Gastrocnemius medialis (tissue), 4 donors: ENCODE measurements at regions of chr16 and their contacts with region 1.

Region 1: DNA sequence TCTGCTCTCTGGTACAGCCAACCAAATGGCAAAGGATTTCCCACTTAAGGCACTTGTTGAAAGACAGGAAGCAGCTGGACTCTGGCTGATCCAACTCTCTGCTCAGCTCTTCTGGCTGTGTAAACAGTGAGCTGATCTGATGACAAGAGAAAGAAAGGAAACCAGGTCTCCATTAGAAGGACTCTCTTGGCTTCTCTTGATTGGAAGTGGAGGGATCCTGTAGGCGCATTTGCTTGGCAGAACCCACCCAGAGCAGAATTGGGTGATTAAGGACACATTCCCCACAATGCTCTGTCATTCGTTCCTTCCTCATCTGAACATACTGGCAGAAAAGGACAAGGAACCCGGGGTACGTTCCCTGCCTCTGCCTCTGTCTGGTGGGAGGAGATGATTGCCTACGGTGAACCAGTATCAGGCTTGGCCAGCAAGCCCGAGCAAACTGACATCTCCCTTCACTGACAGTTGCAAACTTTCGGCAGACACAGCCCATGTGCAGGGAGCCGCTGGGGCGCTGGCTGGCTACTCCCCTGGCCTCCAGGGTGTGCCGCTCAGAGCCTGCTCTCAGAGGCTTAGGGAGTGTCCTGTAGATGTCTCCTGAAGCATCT is 29.1 kb downstream of the LDHD start:
- DNase-seq: peak; percentile 62 to 72
- ATAC-seq: peak; percentile 92 to 94
- H3K4me3 ChIP-seq: peak overlapping the region; percentile 27 to 51 (median 35)
- H3K27ac ChIP-seq: peak overlapping the region; percentile 84 to 91 (median 90)
- H3K4me1 ChIP-seq: peaks cover 66 to 68% of the 10 kb centered on the region in 2 donors
- H3K27me3 ChIP-seq: no peaks in the 10 kb centered on the region
- CTCF ChIP-seq: peak in 1 of 5 experiments; percentile 31
- POLR2A ChIP-seq: no peak

Region 2: GRCh38 chr16:75011634-75012307 is 75.7 kb before region 1 on chr16:
- in situ Hi-C with region 1: no loop called
- intact Hi-C with region 1: loop called (anchors 5 kb)
- DNase-seq: no peak
- ATAC-seq: peak; percentile 51 to 58
- H3K4me3 ChIP-seq: no peak overlapping the region
- H3K27ac ChIP-seq: peak overlapping the region; percentile 64 to 79 (median 74)
- H3K4me1 ChIP-seq: peaks cover 49 to 56% of the 10 kb centered on the region in 2 donors
- H3K27me3 ChIP-seq: no peaks in the 10 kb centered on the region
- CTCF ChIP-seq: no peak
- POLR2A ChIP-seq: no peak